Lower leg skin (tissue), 4 donors: ENCODE measurements at regions of chr10 and their contacts with region 1.

Region 1: GRCh38 chr10:84537447-84537931 is 209.1 kb downstream of the CCSER2 start:
- DNase-seq: no peak
- H3K4me3 ChIP-seq: no peak overlapping the region
- CTCF ChIP-seq: peak in 1 of 3 donors; percentile 72
- POLR2A ChIP-seq: no peak

Region 2: GRCh38 chr10:84156768-84157167 is 380.7 kb before region 1 on chr10:
- intact Hi-C with region 1: loop called (anchors 10 kb)
- DNase-seq: no peak
- H3K4me3 ChIP-seq: no peak overlapping the region
- CTCF ChIP-seq: no peak
- POLR2A ChIP-seq: no peak

Region 3: GRCh38 chr10:84264611-84265141 is 272.8 kb before region 1 on chr10:
- intact Hi-C with region 1: loop called (anchors 5 kb)
- DNase-seq: peak; percentile 47 to 93
- H3K4me3 ChIP-seq: no peak overlapping the region
- CTCF ChIP-seq: peak in 1 of 3 donors; percentile 82
- POLR2A ChIP-seq: no peak

Region 4: GRCh38 chr10:84375011-84375410 is 162.5 kb before region 1 on chr10:
- intact Hi-C with region 1: loop called (anchors 5 kb)
- DNase-seq: peak in 1 of 2 donors; percentile 26
- H3K4me3 ChIP-seq: no peak overlapping the region
- CTCF ChIP-seq: no peak
- POLR2A ChIP-seq: no peak

Region 5: DNA sequence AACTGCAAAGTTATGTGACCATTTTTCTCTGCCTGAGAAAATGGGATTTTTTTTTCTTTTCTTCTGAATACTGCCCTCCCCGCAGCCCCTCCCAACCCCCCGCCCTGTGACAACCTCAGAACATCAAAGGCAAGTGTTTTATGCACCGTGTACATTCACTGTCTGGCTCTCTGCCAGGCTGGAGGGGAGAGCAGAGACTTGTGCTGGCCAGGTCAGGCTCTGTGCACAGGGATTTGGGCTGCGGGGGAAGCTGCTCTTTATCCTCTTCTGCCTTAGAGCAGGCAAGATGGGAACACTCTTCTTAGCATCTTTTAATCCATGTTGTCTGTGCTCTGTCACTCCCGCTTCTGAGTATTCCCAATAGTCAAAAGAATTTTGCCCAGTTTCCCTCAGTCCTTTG is 14.0 kb before region 1 on chr10:
- intact Hi-C with region 1: no loop called
- DNase-seq: no peak
- H3K4me3 ChIP-seq: no peak overlapping the region
- CTCF ChIP-seq: no peak
- POLR2A ChIP-seq: no peak

Region 6: DNA sequence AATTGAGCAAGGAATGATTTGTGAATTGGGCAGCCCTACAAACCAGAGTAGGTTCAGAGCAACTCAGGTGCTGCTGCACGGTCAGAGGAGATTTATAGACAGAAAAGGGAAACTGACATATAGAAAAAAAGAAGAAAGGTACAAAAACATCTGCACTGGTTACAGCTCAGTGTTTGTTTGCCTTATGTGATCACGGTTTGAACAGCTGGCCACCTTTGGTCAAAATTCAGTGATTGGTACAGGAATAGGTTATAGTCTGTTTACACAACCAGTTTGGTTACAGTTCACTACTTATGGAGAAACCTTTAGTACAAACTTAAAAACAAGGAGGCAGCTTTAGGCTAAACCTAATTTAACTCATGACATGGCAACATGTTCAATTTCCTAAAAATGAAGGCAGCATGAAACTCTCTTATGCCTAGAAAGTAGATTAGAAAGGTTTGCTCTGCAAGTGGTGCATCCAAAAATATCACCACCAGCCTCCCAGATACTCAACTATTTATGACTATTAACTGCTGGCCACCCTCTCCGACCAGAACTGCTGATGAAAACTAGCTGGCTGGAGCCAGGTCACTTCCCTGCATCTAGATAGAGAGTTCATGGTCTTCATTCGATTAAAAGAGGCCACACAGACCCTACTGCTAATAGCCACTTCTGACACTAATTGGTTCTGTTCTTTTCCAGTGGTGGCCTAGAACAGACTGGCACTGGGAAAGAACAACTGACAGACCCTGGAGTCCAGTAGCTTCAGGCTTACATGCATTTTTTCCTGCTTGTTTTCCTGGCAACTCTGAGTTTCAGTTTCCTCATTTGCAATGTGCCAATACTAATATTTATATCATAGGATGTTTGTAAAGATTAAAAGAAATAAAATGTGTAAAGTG is 338.9 kb after region 1 on chr10:
- intact Hi-C with region 1: no loop called
- DNase-seq: no peak
- H3K4me3 ChIP-seq: no peak overlapping the region
- CTCF ChIP-seq: no peak
- POLR2A ChIP-seq: no peak